ENCODE measurements at regions of chr7 and their contacts with region 1.

Region 1: GRCh38 chr7:774161-775109 is 47.4 kb upstream of the PRKAR1B start:
- DNase-seq: peak; percentile 58
- H3K4me3 ChIP-seq: no peak overlapping the region
- H3K27ac ChIP-seq: no peak overlapping the region
- H3K4me1 ChIP-seq: peaks cover 36% of the 10 kb centered on the region
- H3K27me3 ChIP-seq: no peaks in the 10 kb centered on the region
- CTCF ChIP-seq: peak; percentile 94

Region 2: GRCh38 chr7:332646-333392 is 441.6 kb before region 1 on chr7:
- intact Hi-C with region 1: loop called (anchors 5 kb)
- DNase-seq: peak; percentile 84
- H3K4me3 ChIP-seq: peak overlapping the region; percentile 66
- H3K27ac ChIP-seq: peak overlapping the region; percentile 85
- H3K4me1 ChIP-seq: peaks cover 15% of the 10 kb centered on the region
- H3K27me3 ChIP-seq: peaks cover 30% of the 10 kb centered on the region
- CTCF ChIP-seq: peak; percentile 91

Measured in left ventricle myocardium inferior (tissue), 1 donor.